ENCODE measurements at regions of chr11 and their contacts with region 1.

Region 1: DNA sequence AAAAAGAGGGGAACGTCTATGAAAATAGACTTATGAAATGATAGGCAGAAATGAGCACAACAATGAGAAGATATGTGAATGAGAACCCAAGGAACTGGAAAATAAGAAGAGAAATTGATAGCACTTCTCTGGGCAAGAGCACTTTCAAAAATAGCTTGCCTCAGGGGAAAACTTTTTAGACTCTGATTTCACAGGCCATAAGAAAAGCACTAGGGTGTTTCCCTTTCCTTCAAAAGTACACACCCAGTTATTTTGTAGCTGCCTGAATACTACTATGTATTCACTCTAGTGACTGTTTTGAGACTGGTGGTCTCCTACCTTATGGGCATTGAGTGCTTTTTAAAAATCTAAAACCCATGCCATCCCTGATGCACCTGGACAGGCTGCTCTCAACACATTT is 172.3 kb upstream of the SOX6 start:
- DNase-seq: no peak
- ATAC-seq: peak in 3 of 4 donors; percentile 35 to 68 (median 65)
- H3K4me3 ChIP-seq: peak overlapping the region; percentile 25
- H3K27ac ChIP-seq: peak overlapping the region; percentile 61
- H3K4me1 ChIP-seq: peaks cover 62% of the 10 kb centered on the region
- H3K27me3 ChIP-seq: no peaks in the 10 kb centered on the region
- CTCF ChIP-seq: no peak

Region 2: DNA sequence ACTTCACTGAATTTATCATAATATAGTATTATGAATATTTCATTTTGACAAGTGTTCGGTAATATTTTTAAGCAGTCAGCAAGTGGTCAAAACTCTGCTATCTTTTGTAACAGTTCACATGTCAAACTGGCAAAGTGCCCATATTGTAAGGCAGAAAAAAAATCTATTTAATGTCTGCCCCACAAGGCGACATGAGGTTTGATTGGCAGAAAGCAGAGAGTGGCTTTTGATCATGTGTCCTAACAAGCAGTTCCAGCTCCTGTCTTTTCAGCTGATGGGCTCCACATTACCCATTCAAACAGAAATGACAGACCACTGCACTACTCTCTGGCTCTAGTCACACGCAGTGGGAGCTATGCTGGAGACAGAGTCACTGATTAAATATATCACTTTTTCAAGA is 231.3 kb before region 1 on chr11:
- intact Hi-C with region 1: no loop called
- DNase-seq: no peak
- ATAC-seq: peak; percentile 34 to 48 (median 46)
- H3K4me3 ChIP-seq: no peak overlapping the region
- H3K27ac ChIP-seq: peak overlapping the region; percentile 84
- H3K4me1 ChIP-seq: peaks cover 80% of the 10 kb centered on the region
- H3K27me3 ChIP-seq: no peaks in the 10 kb centered on the region
- CTCF ChIP-seq: no peak

Region 3: DNA sequence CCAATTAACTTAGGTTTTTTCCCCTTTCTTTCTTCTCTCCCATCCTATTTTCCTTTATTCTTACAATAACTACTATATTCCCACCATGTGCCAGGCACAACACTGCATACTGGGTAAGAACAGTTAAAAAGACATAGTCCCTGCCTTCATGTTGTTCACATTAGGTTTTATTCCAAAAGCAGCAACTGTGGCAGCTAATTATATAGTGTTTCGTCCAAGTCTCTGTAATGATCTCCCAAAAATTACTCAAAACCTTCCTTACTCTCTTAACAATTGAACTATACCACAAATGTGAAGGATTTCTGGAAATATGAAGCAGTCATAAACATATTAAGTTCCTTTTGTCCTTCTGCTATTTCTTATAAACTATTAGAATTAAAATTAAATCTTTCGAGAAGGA is 25.7 kb after region 1 on chr11:
- intact Hi-C with region 1: no loop called
- DNase-seq: no peak
- ATAC-seq: no peak
- H3K4me3 ChIP-seq: no peak overlapping the region
- H3K27ac ChIP-seq: no peak overlapping the region
- H3K4me1 ChIP-seq: peaks cover 50% of the 10 kb centered on the region
- H3K27me3 ChIP-seq: no peaks in the 10 kb centered on the region
- CTCF ChIP-seq: no peak

Region 4: GRCh38 chr11:16587670-16588069 is 59.0 kb after region 1 on chr11:
- intact Hi-C with region 1: loop called in 1 of 2 experiments (anchors 5 kb)
- DNase-seq: peak; percentile 18 to 73
- ATAC-seq: peak; percentile 85 to 96 (median 90)
- H3K4me3 ChIP-seq: no peak overlapping the region
- H3K27ac ChIP-seq: peak overlapping the region; percentile 28
- H3K4me1 ChIP-seq: peaks cover 54% of the 10 kb centered on the region
- H3K27me3 ChIP-seq: no peaks in the 10 kb centered on the region
- CTCF ChIP-seq: no peak